SK-N-SH (cell line): ENCODE measurements at regions of chr6 and their contacts with region 1.

Region 1: DNA sequence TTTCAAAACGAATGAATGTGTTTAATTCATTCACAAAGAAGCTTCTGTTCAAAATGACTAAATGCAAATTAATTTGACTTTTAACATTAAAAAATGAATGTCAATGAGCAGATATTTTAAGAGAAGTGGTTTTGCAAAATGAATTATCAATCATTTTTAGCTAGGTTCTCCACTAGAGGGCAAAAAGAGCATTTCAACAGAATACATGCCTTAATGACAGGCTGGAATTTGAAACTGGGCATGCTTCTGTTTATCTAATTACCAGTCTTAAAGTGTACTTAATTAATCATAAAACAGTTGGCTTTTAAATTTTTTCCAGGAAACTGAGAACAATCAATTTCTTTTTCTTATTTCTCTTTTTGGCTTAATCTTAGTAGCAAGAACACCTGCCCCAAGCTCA is 63.8 kb upstream of the TINAG start:
- DNase-seq: peak; percentile 3
- H3K4me3 ChIP-seq: no peak overlapping the region; a peak in 1 of 4 replicates
- H3K27ac ChIP-seq: peak overlapping the region in 1 of 2 experiments; percentile 36; a peak in 1 of 4 replicates
- H3K4me1 ChIP-seq: no peaks in the 10 kb centered on the region; a peak in 1 of 4 replicates
- H3K27me3 ChIP-seq: peaks cover 4% of the 10 kb centered on the region; the same call in 1 of the 2 replicates
- CTCF ChIP-seq: peak; percentile 78
- EP300 ChIP-seq: no peak
- RAD21 ChIP-seq: peak; percentile 47

Region 2: DNA sequence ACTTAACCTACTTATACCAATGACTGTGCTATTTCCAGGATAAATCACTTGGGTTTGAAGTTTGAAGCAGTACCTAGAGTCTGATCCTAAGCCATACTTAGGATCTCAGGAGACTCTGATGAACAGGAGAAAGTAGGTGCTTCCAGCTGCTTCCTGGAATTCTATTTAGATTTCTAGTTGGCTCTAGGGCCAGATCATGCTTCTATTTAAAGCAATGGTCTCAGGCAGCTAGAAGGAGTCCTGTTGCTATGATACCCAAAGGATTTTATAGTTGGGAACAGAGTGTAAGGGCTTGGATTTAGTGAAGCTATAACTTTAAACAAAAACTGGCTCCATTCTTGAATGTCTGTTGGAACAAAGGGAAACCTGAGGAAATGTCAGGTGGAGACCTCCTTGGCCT is 11.5 kb after region 1 on chr6:
- CTCF ChIA-PET with region 1: interaction called, 15 read pairs
- POLR2A ChIA-PET with region 1: no interaction called
- DNase-seq: no peak
- H3K4me3 ChIP-seq: no peak overlapping the region
- H3K27ac ChIP-seq: peak overlapping the region; percentile 7 to 58; a peak in 2 of 4 replicates
- H3K4me1 ChIP-seq: no peaks in the 10 kb centered on the region; a peak in 2 of 4 replicates
- H3K27me3 ChIP-seq: no peaks in the 10 kb centered on the region
- CTCF ChIP-seq: no peak
- EP300 ChIP-seq: no peak
- RAD21 ChIP-seq: no peak

Region 3: GRCh38 chr6:54273214-54273820 is 28.9 kb after region 1 on chr6:
- CTCF ChIA-PET with region 1: interaction called, 12 read pairs
- POLR2A ChIA-PET with region 1: no interaction called
- DNase-seq: no peak
- H3K4me3 ChIP-seq: no peak overlapping the region
- H3K27ac ChIP-seq: no peak overlapping the region
- H3K4me1 ChIP-seq: no peaks in the 10 kb centered on the region
- H3K27me3 ChIP-seq: no peaks in the 10 kb centered on the region
- CTCF ChIP-seq: no peak
- EP300 ChIP-seq: no peak
- RAD21 ChIP-seq: no peak

Region 4: DNA sequence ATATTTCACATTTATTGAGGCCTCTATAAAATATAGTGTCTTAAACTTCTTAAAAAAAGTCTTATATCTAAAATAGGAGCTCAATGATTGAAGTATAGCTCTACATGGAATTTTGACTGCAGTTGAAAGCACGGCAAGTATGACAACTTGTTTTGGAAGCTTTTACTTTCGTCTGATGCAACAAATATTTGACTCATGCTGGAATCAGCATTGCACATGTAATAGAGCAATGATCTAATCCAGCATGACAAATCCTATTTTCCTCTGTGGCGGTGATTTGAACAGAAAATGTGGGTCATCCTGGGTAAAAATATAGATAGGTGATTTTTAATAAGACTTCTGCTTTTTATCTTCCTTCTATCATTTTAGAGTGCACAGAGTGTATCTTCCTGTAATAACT is 175.5 kb after region 1 on chr6:
- CTCF ChIA-PET with region 1: no interaction called
- POLR2A ChIA-PET with region 1: no interaction called
- DNase-seq: no peak
- H3K4me3 ChIP-seq: no peak overlapping the region
- H3K27ac ChIP-seq: peak overlapping the region in 1 of 2 experiments; percentile 42; a peak in 3 of 4 replicates
- H3K4me1 ChIP-seq: no peaks in the 10 kb centered on the region
- H3K27me3 ChIP-seq: no peaks in the 10 kb centered on the region
- CTCF ChIP-seq: no peak
- EP300 ChIP-seq: peak in 1 of 2 experiments; percentile 86; a peak in 2 of 4 replicates
- RAD21 ChIP-seq: no peak